HCT116 (cell line): ENCODE measurements at regions of chr6 and their contacts with region 1.

Region 1: GRCh38 chr6:127690092-127690491 is 113.1 kb downstream of the C6orf58 start:
- DNase-seq: peak; percentile 27
- ATAC-seq: no peak
- H3K4me3 ChIP-seq: no peak overlapping the region
- H3K27ac ChIP-seq: no peak overlapping the region
- H3K4me1 ChIP-seq: no peaks in the 10 kb centered on the region
- H3K27me3 ChIP-seq: no peaks in the 10 kb centered on the region
- CTCF ChIP-seq: peak; percentile 64 to 75 (median 71)
- POLR2A ChIP-seq: no peak
- RAD21 ChIP-seq: peak; percentile 81

Region 2: GRCh38 chr6:127554435-127555006 is 135.6 kb before region 1 on chr6:
- CTCF ChIA-PET with region 1: interaction called, 14 read pairs
- POLR2A ChIA-PET with region 1: no interaction called
- RAD21 ChIA-PET with region 1: no interaction called
- intact Hi-C with region 1: loop called (anchors 1 kb)
- DNase-seq: peak; percentile 60
- ATAC-seq: peak; percentile 100
- H3K4me3 ChIP-seq: no peak overlapping the region
- H3K27ac ChIP-seq: no peak overlapping the region
- H3K4me1 ChIP-seq: no peaks in the 10 kb centered on the region
- H3K27me3 ChIP-seq: no peaks in the 10 kb centered on the region
- CTCF ChIP-seq: peak; percentile 60 to 73 (median 70); a peak in 5 of 6 replicates
- POLR2A ChIP-seq: no peak
- RAD21 ChIP-seq: peak; percentile 86